ENCODE measurements at regions of chr6 and their contacts with region 1.

Region 1: DNA sequence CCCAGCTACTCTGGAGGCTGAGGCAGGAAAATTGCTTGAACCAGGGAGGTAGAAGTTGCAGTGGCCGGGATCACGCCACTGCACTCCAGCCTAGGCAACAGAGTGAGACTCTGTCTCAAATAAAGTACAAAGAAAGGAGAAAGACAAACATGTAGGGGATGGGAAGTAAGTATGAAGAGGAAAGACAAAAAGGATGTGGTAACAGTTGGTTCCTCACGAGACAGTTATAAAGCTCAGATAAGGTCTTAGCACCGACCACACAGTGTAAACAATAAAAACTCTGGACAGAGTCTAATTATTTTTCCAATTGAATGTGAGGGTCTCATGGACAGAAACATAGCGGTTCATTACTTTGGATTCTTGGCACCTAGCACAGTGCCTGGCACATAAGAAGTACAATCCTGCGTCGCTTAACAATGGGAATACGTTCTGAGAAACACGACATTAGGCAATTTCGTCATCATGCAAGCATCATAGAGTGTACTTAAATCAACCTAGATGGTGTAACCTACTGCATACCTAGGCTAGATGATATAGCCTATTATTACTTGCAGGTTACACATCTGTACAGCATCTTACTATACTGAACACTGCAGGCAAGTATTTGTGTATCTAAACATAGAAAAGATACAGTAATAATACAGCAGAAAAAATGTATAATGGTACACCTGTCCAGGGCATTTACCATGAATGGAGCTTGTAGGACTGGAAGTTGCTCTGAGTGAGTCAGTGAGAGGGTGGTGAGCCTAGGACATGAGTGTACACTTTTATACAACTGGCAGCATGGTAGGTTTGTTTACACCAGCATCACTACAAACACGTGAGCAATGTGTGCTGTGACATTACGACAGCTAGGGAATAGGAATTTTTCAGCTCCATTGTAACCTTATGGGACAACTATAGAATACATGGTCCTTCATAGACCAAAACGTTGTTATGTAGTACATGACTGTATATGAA is 38.2 kb downstream of the MBOAT1 start:
- DNase-seq: peak in 3 of 14 experiments; percentile 16 to 29 (median 18)
- ATAC-seq: peak; percentile 82
- H3K4me3 ChIP-seq: no peak overlapping the region
- H3K4me3 Mint-ChIP-seq: peak overlapping the region; percentile 3
- H3K27ac ChIP-seq: no peak overlapping the region
- H3K27ac Mint-ChIP-seq: peak overlapping the region; percentile 74
- H3K4me1 ChIP-seq: peaks cover 15% of the 10 kb centered on the region
- H3K4me1 Mint-ChIP-seq: peaks cover 53% of the 10 kb centered on the region
- H3K27me3 ChIP-seq: no peaks in the 10 kb centered on the region
- H3K27me3 Mint-ChIP-seq: no peaks in the 10 kb centered on the region
- CTCF ChIP-seq: no peak

Region 2: DNA sequence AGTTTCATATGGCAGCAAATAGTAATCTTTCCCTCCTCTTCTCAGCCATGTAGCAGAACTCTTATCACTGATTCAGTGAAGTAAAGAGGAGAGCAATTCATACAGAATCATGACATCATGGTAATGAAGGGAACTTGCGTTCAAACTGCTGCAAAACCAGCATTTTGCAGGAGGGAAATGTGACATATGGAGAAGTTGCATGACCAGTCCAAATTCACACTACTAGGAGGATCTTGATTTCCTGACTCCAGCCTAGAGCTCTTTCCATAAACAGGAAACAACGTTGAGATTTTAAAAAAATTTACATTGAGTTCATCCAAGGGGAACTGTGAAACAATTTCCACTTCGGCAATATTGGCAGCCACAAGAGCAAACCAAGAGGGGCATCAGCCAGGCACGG is 25.7 kb before region 1 on chr6:
- CTCF ChIA-PET with region 1: no interaction called
- POLR2A ChIA-PET with region 1: no interaction called
- intact Hi-C with region 1: no loop called
- DNase-seq: no peak
- ATAC-seq: no peak
- H3K4me3 ChIP-seq: no peak overlapping the region
- H3K4me3 Mint-ChIP-seq: no peak overlapping the region
- H3K27ac ChIP-seq: no peak overlapping the region
- H3K27ac Mint-ChIP-seq: no peak overlapping the region
- H3K4me1 ChIP-seq: no peaks in the 10 kb centered on the region
- H3K4me1 Mint-ChIP-seq: no peaks in the 10 kb centered on the region
- H3K27me3 ChIP-seq: no peaks in the 10 kb centered on the region
- H3K27me3 Mint-ChIP-seq: no peaks in the 10 kb centered on the region
- CTCF ChIP-seq: no peak

Region 3: DNA sequence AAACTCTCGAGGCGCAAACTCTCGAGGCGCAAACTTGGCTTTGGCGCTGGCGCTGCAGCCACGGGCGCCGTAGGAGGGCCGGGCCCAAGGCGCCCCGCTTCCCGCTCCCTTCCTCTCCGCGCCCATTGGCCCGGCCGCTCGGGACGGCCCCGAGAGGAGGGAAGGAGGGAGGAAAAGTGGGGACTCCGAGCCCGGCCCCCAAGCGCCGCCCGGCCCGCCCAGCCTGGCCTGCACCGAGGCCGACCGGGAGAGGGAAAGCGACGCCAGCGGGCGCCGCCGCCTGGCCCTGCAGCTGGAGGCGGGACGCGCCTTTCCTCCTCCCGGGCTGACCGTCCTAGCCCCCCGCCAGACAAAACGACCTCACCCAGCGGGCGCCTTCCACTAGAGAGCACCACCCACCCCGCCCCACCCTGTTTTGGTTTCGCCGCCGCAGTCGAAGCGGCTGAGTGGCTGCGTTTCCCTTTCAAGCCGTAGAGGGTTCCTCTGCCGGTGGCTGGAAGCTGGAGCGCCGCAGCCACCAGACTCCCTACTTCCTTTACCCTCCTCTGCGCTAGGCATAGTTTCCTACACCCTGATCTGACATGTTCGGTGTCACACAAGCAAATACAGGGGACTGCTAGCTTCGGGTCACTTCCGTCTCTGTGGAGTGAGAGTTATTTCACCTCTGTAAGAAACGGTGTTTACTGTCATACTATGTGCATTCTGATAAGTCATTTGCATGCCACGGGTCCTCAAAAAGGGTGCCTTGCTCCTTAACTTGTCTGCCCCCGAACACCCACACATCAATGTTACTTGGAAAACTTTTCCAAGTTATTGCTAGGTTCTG is 38.5 kb after region 1 on chr6 and contains the start of gene MBOAT1:
- CTCF ChIA-PET with region 1: no interaction called
- POLR2A ChIA-PET with region 1: interaction called, 4 read pairs
- intact Hi-C with region 1: loop called in 1 of 2 experiments (anchors 5 kb)
- DNase-seq: peak; percentile 27 to 86 (median 56)
- ATAC-seq: peak; percentile 78
- H3K4me3 ChIP-seq: peak within 1 kb of the TSS; percentile 83
- H3K4me3 Mint-ChIP-seq: peak within 1 kb of the TSS; percentile 99
- H3K27ac ChIP-seq: peak within 1 kb of the TSS; percentile 61 to 78
- H3K27ac Mint-ChIP-seq: peak within 1 kb of the TSS; percentile 97
- H3K4me1 ChIP-seq: peaks cover 28% of the 10 kb centered on the region
- H3K4me1 Mint-ChIP-seq: peaks cover 48% of the 10 kb centered on the region
- H3K27me3 ChIP-seq: no peaks in the 10 kb centered on the region
- H3K27me3 Mint-ChIP-seq: no peaks in the 10 kb centered on the region
- CTCF ChIP-seq: no peak
- total RNA-seq, gene MBOAT1: 17.2 to 18.5 TPM